Caco-2 (cell line): ENCODE measurements at regions of chr3 and their contacts with region 1.

Region 1: GRCh38 chr3:50088725-50089608 is at the start of gene RBM5:
- DNase-seq: peak; percentile 94
- H3K4me3 ChIP-seq: peak within 1 kb of the TSS; percentile 98
- H3K4me3 Mint-ChIP-seq: peak within 1 kb of the TSS; percentile 93
- H3K27ac Mint-ChIP-seq: peak within 1 kb of the TSS; percentile 97
- H3K4me1 ChIP-seq: no peaks in the 10 kb centered on the region
- H3K4me1 Mint-ChIP-seq: peaks cover 14% of the 10 kb centered on the region
- H3K27me3 ChIP-seq: no peaks in the 10 kb centered on the region
- H3K27me3 Mint-ChIP-seq: no peaks in the 10 kb centered on the region
- CTCF ChIP-seq: no peak
- total RNA-seq, gene RBM5: 145 and 166 TPM in 2 replicates

Region 2: DNA sequence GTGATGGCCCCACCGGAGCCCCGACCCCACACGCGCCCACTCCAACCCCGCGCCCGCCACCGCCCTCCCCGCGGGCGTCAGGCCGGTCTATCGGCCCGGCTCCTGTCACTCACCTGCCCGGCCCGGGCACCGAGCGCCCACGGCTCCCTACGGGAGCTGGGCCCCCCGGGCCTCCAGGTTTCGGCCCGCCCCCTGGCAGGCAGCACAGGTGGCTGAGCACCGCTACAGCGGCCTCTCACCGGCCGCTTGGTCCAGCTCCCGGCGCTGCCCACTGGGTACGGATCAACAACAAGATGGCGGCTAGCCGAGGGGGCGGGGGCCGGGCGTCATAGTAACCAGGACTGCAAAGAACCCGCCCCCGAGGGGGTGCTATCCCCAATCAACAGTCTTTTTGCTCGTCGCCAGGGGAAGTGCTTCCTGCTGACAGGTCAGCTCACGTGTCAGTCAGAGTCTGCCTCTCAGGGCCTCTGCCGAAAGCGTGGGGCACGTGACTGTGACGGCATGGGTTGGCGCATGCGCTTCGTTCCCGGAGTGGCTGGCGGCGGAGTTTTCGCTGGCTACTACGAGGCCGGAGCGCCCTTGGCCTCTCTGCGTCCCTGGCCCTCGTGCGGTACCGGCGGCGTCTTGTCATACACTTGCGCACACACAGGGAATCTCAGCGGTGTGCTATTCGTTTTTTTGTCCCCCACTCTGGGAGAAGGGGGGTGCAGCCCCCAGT is 302.6 kb before region 1 on chr3 and contains the start of gene IP6K1:
- CTCF ChIA-PET with region 1: no interaction called
- POLR2A ChIA-PET with region 1: no interaction called
- intact Hi-C with region 1: no loop called
- DNase-seq: peak; percentile 99 to 100
- H3K4me3 ChIP-seq: peak within 1 kb of the TSS; percentile 71
- H3K4me3 Mint-ChIP-seq: peak within 1 kb of the TSS; percentile 85
- H3K27ac Mint-ChIP-seq: peak within 1 kb of the TSS; percentile 90
- H3K4me1 ChIP-seq: peaks cover 17% of the 10 kb centered on the region
- H3K4me1 Mint-ChIP-seq: peaks cover 2% of the 10 kb centered on the region
- H3K27me3 ChIP-seq: no peaks in the 10 kb centered on the region
- H3K27me3 Mint-ChIP-seq: no peaks in the 10 kb centered on the region
- CTCF ChIP-seq: no peak
- total RNA-seq, gene IP6K1: 35.5 and 39.6 TPM in 2 replicates

Region 3: DNA sequence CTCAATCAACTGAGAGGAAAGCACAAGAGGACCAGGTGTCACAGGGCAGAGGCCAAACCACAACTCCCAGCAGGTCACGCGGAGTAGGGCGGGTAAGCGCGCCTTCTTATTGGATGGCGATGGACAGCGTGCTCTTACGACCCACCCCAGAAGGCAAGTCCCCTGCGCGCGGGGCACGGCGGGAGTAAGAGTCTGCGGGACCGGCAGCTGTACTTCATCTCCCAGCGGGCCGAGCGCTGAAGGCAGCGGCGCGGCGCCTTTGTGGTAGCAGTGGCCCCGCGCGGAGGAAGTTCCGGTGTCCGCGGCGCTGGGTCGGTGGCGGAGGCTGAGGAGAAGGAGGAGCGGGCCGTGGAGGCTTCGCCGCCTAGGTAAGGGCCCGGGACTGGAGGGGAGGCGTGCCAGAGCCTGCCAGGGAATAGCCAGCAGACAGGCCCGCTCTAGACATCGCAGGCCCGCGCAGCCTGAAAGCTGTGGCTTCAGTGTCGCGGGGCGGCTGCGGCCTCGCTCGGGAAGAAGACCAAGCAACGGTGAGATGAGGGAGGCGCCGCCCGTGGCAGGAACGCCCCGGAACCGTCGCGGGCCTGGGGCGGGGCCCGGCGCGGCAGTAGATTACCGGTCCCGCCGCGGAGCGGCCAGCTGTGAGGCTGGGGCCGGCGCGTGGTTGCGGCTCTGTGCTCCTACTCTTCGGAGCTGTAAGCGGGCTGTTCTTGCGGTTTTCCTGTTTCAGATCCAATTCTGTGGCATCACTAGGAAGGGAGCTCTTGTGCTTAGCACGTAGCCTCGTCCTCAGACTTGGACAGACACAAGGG is 148.9 kb before region 1 on chr3 and contains the start of gene RBM6:
- CTCF ChIA-PET with region 1: no interaction called
- POLR2A ChIA-PET with region 1: no interaction called
- intact Hi-C with region 1: loop called (anchors 5 kb)
- DNase-seq: peak; percentile 97 to 98
- H3K4me3 ChIP-seq: peak within 1 kb of the TSS; percentile 68
- H3K4me3 Mint-ChIP-seq: peak within 1 kb of the TSS; percentile 81
- H3K27ac Mint-ChIP-seq: peak within 1 kb of the TSS; percentile 81
- H3K4me1 ChIP-seq: peaks cover 3% of the 10 kb centered on the region; the same call in 1 of the 2 replicates
- H3K4me1 Mint-ChIP-seq: no peaks in the 10 kb centered on the region
- H3K27me3 ChIP-seq: no peaks in the 10 kb centered on the region
- H3K27me3 Mint-ChIP-seq: no peaks in the 10 kb centered on the region
- CTCF ChIP-seq: no peak
- total RNA-seq, gene RBM6: 69.8 and 74.1 TPM in 2 replicates